Kidney (tissue), 22 donors: ENCODE measurements at regions of chr3 and their contacts with region 1.

Region 1: GRCh38 chr3:194134757-194135528 is 1.0 kb upstream of the HES1 start:
- DNase-seq: peak; percentile 98 to 99 (median 98)
- H3K4me3 ChIP-seq: peak overlapping the region; percentile 43 to 96 (median 82)
- H3K27ac ChIP-seq: peak overlapping the region; percentile 97
- H3K4me1 ChIP-seq: peaks cover 5 to 39% (median 34%) of the 10 kb centered on the region in 3 donors
- H3K27me3 ChIP-seq: no peaks in the 10 kb centered on the region
- CTCF ChIP-seq: no peak

Region 2: DNA sequence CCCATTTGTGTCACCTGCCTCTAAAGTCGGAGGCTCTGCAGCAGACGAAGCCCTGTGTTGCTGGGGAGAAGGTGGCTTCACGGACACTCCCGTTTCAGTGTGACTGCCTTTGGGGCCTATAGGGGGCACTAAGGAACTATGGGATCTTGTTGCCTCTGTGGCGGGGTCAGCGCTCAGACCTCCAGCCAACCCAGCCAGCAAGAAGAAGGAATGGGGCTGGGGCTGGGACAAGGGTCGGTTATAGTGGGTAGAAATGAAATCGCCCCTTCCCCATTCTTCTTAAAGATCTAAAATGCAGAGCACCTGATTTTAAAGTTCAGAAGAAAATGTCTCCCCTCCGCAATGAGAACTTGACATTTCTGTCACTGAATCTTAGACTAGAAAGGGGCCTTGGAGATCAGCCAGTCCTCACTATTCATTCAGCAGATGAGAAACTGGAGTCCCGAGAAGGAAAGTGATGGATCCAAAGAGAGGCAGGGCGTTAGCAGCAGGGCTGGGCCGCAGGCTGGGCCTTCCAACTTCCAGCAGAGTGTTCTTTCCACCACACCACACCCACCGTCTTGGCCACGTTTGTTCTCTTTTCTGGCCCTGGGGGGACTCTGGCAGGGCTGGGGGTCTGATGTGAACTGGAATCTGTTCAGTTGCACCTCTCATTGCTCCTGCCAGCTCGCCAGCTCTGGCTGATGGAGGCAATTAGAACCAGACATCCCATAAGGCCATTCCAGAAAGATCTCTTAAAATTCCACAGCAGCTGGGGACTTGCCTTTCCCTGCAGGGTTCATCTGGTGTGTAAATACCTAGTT is 346.6 kb before region 1 on chr3:
- intact Hi-C with region 1: loop called (anchors 10 kb)
- DNase-seq: peak; percentile 73 to 92 (median 83)
- H3K4me3 ChIP-seq: no peak overlapping the region
- H3K27ac ChIP-seq: peak overlapping the region in 1 of 2 donors; percentile 3
- H3K4me1 ChIP-seq: peaks cover 0 to 3% (median 0%) of the 10 kb centered on the region in 3 donors
- H3K27me3 ChIP-seq: no peaks in the 10 kb centered on the region
- CTCF ChIP-seq: peak; percentile 76

Region 3: GRCh38 chr3:194003125-194004057 is 131.6 kb before region 1 on chr3:
- intact Hi-C with region 1: loop called (anchors 10 kb)
- DNase-seq: peak; percentile 88 to 97 (median 91)
- H3K4me3 ChIP-seq: peak overlapping the region in 2 of 3 donors; percentile 32 to 48
- H3K27ac ChIP-seq: peak overlapping the region; percentile 75 to 83
- H3K4me1 ChIP-seq: peaks cover 0 to 15% (median 10%) of the 10 kb centered on the region in 3 donors
- H3K27me3 ChIP-seq: no peaks in the 10 kb centered on the region
- CTCF ChIP-seq: no peak